CD8-positive, alpha-beta T cell (primary cell): ENCODE measurements at regions of chr6 and their contacts with region 1.

Region 1: DNA sequence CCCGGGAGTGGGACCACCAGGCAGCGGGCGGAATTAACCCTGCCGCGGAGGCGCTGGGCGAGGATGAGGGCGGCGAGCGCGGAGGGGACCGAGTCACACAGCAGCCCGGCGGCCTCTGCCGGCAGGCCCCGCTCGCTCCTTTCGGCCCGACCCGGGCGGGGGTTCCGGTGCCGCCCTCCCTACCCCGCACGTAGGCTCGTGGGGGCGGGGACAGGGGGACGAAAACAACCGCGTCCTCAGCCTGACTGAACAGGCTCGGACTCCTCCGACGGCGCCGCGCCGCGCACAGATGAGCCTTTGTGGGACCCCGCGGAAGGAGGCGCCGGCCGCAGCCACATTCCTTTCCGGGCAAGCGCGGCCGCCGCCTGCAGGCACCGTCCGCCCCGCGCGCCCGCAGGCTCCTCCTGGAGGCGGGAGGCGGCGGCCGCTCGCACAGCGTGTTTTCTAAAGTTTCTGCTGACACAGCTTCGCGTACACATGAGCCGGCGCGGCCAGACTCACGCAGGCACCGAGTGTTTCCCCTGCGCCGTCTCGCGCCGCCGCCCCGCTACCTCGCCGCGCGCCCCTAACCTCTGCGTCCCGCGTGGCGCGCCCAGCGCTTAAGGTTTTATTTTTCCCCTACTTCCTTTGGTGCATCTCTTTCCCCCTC is 244.3 kb downstream of the ARID1B start:
- DNase-seq: peak; percentile 75 to 93 (median 89)
- ATAC-seq: peak; percentile 75
- H3K4me3 ChIP-seq: peak overlapping the region; percentile 66 to 93
- H3K4me3 Mint-ChIP-seq: peak overlapping the region; percentile 95
- H3K27ac ChIP-seq: peak overlapping the region; percentile 96 to 98
- H3K27ac Mint-ChIP-seq: peak overlapping the region; percentile 100
- H3K4me1 ChIP-seq: peaks cover 8% of the 10 kb centered on the region
- H3K4me1 Mint-ChIP-seq: peaks cover 59% of the 10 kb centered on the region
- H3K27me3 ChIP-seq: no peaks in the 10 kb centered on the region
- H3K27me3 Mint-ChIP-seq: no peaks in the 10 kb centered on the region
- CTCF ChIP-seq: no peak

Region 2: GRCh38 chr6:156564127-156564806 is 457.2 kb before region 1 on chr6:
- CTCF ChIA-PET with region 1: interaction called, 6 read pairs
- POLR2A ChIA-PET with region 1: no interaction called
- intact Hi-C with region 1: loop called (anchors 1 to 2 kb)
- DNase-seq: peak; percentile 59 to 88 (median 73)
- ATAC-seq: peak; percentile 93
- H3K4me3 ChIP-seq: no peak overlapping the region
- H3K4me3 Mint-ChIP-seq: no peak overlapping the region
- H3K27ac ChIP-seq: no peak overlapping the region
- H3K27ac Mint-ChIP-seq: no peak overlapping the region
- H3K4me1 ChIP-seq: no peaks in the 10 kb centered on the region
- H3K4me1 Mint-ChIP-seq: no peaks in the 10 kb centered on the region
- H3K27me3 ChIP-seq: peaks cover 0 to 3% of the 10 kb centered on the region in 2 experiments
- H3K27me3 Mint-ChIP-seq: peaks cover 6% of the 10 kb centered on the region
- CTCF ChIP-seq: peak; percentile 89

Region 3: GRCh38 chr6:156839591-156840001 is 181.9 kb before region 1 on chr6:
- CTCF ChIA-PET with region 1: no interaction called
- POLR2A ChIA-PET with region 1: no interaction called
- intact Hi-C with region 1: no loop called
- DNase-seq: no peak
- ATAC-seq: no peak
- H3K4me3 ChIP-seq: no peak overlapping the region
- H3K4me3 Mint-ChIP-seq: no peak overlapping the region
- H3K27ac ChIP-seq: no peak overlapping the region
- H3K27ac Mint-ChIP-seq: no peak overlapping the region
- H3K4me1 ChIP-seq: peaks cover 23% of the 10 kb centered on the region
- H3K4me1 Mint-ChIP-seq: peaks cover 70% of the 10 kb centered on the region
- H3K27me3 ChIP-seq: no peaks in the 10 kb centered on the region
- H3K27me3 Mint-ChIP-seq: no peaks in the 10 kb centered on the region
- CTCF ChIP-seq: no peak

Region 4: GRCh38 chr6:157034436-157035230 is 13.2 kb after region 1 on chr6:
- CTCF ChIA-PET with region 1: interaction called, 10 read pairs
- POLR2A ChIA-PET with region 1: interaction called, 6 read pairs
- intact Hi-C with region 1: loop called in 1 of 2 experiments (anchors 1 kb)
- DNase-seq: peak in 2 of 9 experiments; percentile 61 to 74
- ATAC-seq: peak; percentile 83
- H3K4me3 ChIP-seq: no peak overlapping the region
- H3K4me3 Mint-ChIP-seq: peak overlapping the region; percentile 97
- H3K27ac ChIP-seq: no peak overlapping the region
- H3K27ac Mint-ChIP-seq: peak overlapping the region; percentile 53
- H3K4me1 ChIP-seq: peaks cover 24% of the 10 kb centered on the region
- H3K4me1 Mint-ChIP-seq: peaks cover 33% of the 10 kb centered on the region
- H3K27me3 ChIP-seq: no peaks in the 10 kb centered on the region
- H3K27me3 Mint-ChIP-seq: no peaks in the 10 kb centered on the region
- CTCF ChIP-seq: peak; percentile 77

Region 5: GRCh38 chr6:157379656-157380454 is 358.4 kb after region 1 on chr6:
- CTCF ChIA-PET with region 1: no interaction called
- POLR2A ChIA-PET with region 1: no interaction called
- intact Hi-C with region 1: loop called in 1 of 2 experiments (anchors 5 kb)
- DNase-seq: peak; percentile 76 to 92 (median 89)
- ATAC-seq: peak; percentile 79
- H3K4me3 ChIP-seq: peak overlapping the region; percentile 92 to 96
- H3K4me3 Mint-ChIP-seq: peak overlapping the region; percentile 83
- H3K27ac ChIP-seq: peak overlapping the region; percentile 68 to 80
- H3K27ac Mint-ChIP-seq: peak overlapping the region; percentile 64
- H3K4me1 ChIP-seq: peaks cover 10% of the 10 kb centered on the region
- H3K4me1 Mint-ChIP-seq: peaks cover 20% of the 10 kb centered on the region
- H3K27me3 ChIP-seq: no peaks in the 10 kb centered on the region
- H3K27me3 Mint-ChIP-seq: no peaks in the 10 kb centered on the region
- CTCF ChIP-seq: no peak